ENCODE measurements at regions of chr11 and their contacts with region 1.

Region 1: GRCh38 chr11:94519478-94520084 is 7.3 kb downstream of the C11orf97 start:
- DNase-seq: no peak
- H3K4me3 ChIP-seq: no peak overlapping the region
- H3K27ac ChIP-seq: no peak overlapping the region
- H3K4me1 ChIP-seq: peaks cover 0 to 4% (median 2%) of the 10 kb centered on the region in 4 donors
- H3K27me3 ChIP-seq: peaks cover 0 to 4% (median 0%) of the 10 kb centered on the region in 3 donors
- CTCF ChIP-seq: peak in 3 of 4 experiments; percentile 23 to 66 (median 58)
- EP300 ChIP-seq: no peak
- POLR2A ChIP-seq: no peak

Region 2: DNA sequence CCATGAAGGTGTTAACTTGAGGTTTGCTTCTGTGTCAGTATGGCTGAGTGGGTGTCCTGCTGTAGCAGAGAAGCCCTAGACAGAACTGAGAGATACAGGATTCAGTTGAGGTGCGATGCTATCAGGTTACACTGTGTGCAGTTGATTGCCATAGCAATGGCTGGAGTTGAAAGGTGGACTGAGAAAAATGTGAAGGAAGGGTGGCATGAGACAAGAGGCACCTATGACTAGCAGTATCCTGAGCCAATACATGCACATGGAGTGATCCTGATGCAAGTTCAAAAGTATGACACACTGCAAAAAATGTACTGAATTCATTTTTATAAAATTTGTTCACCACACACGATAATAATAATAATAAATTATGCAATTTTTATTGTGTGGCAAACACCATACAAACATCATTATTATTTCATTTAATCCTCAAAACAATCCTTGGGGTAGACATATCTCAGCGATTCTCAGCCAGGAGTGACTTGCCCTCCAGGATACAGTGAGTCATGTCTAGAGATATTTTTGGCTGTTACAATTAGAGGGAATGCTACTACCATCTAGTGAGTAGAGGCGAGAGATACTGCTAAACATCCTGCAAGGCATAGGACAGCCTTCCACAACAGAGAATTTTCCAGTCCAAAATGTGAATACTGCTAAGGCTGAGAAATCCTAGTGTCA is 43.7 kb after region 1 on chr11:
- intact Hi-C with region 1: loop called (anchors 2 kb)
- DNase-seq: no peak
- H3K4me3 ChIP-seq: no peak overlapping the region
- H3K27ac ChIP-seq: no peak overlapping the region
- H3K4me1 ChIP-seq: peaks cover 0 to 14% (median 9%) of the 10 kb centered on the region in 4 donors
- H3K27me3 ChIP-seq: no peaks in the 10 kb centered on the region
- CTCF ChIP-seq: peak in 1 of 4 experiments; percentile 25
- EP300 ChIP-seq: no peak
- POLR2A ChIP-seq: no peak

Region 3: GRCh38 chr11:94602430-94603372 is 83.1 kb after region 1 on chr11:
- intact Hi-C with region 1: loop called (anchors 2 kb)
- DNase-seq: peak; percentile 78
- H3K4me3 ChIP-seq: no peak overlapping the region
- H3K27ac ChIP-seq: no peak overlapping the region
- H3K4me1 ChIP-seq: no peaks in the 10 kb centered on the region
- H3K27me3 ChIP-seq: no peaks in the 10 kb centered on the region
- CTCF ChIP-seq: peak in 1 of 4 experiments; percentile 26
- EP300 ChIP-seq: no peak
- POLR2A ChIP-seq: no peak

Region 4: DNA sequence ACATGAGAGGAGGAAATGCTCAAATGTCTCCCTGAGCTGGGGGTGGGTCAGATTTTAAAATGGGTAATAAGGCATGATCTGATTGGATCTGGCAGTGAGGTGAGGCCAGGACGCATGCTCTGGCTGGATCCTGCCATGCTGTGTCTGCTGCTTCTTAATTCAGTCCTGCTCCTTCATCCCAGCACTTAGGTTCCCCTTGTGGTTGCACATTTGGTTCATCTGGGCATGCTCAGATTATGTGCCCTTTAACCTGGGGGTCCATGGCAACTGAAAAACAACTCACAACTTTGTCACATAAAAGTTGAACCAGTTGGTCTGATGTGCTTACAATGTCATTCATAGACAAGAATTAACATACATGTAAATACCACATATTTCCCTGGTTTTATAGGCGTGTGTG is 115.5 kb after region 1 on chr11:
- intact Hi-C with region 1: no loop called
- DNase-seq: no peak
- H3K4me3 ChIP-seq: no peak overlapping the region
- H3K27ac ChIP-seq: no peak overlapping the region
- H3K4me1 ChIP-seq: peaks cover 0 to 22% (median 16%) of the 10 kb centered on the region in 4 donors
- H3K27me3 ChIP-seq: no peaks in the 10 kb centered on the region
- CTCF ChIP-seq: no peak
- EP300 ChIP-seq: no peak
- POLR2A ChIP-seq: no peak

Region 5: DNA sequence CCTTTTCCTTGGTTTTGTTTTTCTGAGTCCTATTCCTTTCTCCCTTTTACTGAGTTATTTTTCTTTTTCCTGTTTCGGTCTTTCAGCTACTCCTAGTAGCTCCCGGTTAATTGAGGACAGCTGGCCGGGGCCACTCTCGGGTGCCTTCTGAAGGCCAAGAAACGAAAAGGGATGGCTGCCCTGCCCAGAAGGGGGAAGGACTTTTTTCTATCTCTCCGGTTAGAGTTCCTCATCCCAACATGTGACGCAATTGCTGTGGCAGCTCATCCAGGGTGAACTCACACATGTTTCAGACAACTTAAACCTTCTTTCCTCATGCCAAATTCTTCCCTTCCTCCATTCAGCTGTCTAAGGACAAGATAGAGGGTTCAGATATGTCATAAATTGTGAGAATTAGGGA is 131.2 kb after region 1 on chr11:
- intact Hi-C with region 1: no loop called
- DNase-seq: peak; percentile 77
- H3K4me3 ChIP-seq: no peak overlapping the region
- H3K27ac ChIP-seq: peak overlapping the region in 2 of 4 donors; percentile 6 to 17
- H3K4me1 ChIP-seq: no peaks in the 10 kb centered on the region
- H3K27me3 ChIP-seq: no peaks in the 10 kb centered on the region
- CTCF ChIP-seq: no peak
- EP300 ChIP-seq: no peak
- POLR2A ChIP-seq: no peak

Region 6: DNA sequence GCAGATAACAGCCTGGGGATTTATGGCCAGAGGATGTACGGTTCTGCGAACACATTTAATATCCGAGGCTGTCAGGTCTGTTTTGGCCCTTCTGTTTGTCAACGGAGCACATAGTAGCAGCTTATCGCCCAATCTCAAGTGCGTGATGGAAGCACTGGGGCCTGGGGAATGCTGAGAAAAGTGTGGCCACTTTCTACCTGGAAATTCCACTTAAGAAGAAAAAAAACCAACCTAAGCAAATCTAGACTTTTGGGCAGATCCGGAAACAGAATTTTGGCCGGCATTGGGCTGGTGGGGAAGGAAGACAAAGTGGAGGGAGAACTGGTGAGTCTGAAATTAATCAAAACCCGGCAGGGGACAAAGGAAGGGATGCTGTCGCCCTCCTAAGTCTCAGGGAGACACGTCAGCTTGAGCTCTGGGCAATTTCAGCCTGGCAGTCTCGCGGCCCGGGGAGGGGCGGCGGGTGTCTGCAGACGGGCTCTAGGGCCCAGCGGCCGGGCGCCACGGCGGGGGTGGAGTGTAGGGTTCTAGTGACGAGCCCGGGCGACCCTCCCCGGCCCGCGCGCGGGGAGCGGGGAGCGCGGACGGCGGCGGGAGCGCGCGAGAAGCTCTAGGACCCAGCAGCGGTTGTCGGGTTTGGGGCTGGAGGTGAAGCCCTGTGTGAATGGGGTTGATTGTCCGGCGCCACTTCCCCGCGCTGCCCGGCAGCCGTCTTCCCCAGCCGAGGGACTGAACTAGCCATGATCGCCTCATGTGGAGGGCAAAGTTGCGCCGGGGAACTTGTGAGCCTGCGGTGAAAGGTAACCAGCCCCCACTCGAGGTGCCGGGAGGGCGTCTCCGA is 248.4 kb after region 1 on chr11 and contains the start of gene AMOTL1:
- intact Hi-C with region 1: no loop called
- DNase-seq: peak; percentile 96
- H3K4me3 ChIP-seq: peak within 1 kb of the TSS; percentile 84 to 95 (median 91)
- H3K27ac ChIP-seq: peak within 1 kb of the TSS; percentile 97 to 99 (median 98)
- H3K4me1 ChIP-seq: peaks cover 0 to 77% (median 59%) of the 10 kb centered on the region in 4 donors
- H3K27me3 ChIP-seq: no peaks in the 10 kb centered on the region
- CTCF ChIP-seq: no peak
- EP300 ChIP-seq: peak in 2 of 4 donors; percentile 7 to 61
- POLR2A ChIP-seq: peak in 1 of 2 donors; percentile 74
- total RNA-seq, gene AMOTL1: 96.3 to 161 (median 115) TPM